Activated naive CD4-positive, alpha-beta T cell treated with anti-CD3 and anti-CD28 coated beads for 36 hours (primary cell): ENCODE measurements at regions of chr7 and their contacts with region 1.

Region 1: DNA sequence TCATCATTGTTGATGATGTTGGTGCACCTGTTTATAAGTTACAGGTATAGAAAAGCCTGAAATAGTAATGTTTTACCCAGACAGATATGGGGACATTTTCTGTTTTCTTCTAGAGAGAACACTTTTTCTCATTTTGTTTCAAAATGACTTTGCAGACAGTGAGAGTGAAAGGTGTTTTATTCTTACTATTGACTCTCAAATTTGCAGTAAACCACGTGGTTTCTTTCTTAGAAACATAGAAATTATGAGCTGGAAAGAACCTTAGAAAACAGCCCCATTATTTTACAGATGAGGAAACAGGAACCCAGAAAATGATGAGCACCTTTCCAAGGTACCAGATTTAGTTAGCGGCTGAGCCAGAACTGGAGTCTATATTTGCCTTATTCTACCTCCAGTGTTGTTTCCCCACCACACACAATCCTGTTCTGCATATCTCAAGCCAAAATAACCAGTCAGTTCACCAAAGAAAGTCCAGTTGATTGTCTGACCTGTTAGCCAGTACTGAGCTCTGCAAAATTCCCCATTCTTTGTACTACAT is 138.9 kb upstream of the AHR start:
- DNase-seq: peak; percentile 45
- H3K4me3 Mint-ChIP-seq: no peak overlapping the region
- H3K27ac Mint-ChIP-seq: peak overlapping the region; percentile 76
- H3K4me1 Mint-ChIP-seq: peaks cover 21% of the 10 kb centered on the region
- H3K27me3 Mint-ChIP-seq: peaks cover 2% of the 10 kb centered on the region

Region 2: DNA sequence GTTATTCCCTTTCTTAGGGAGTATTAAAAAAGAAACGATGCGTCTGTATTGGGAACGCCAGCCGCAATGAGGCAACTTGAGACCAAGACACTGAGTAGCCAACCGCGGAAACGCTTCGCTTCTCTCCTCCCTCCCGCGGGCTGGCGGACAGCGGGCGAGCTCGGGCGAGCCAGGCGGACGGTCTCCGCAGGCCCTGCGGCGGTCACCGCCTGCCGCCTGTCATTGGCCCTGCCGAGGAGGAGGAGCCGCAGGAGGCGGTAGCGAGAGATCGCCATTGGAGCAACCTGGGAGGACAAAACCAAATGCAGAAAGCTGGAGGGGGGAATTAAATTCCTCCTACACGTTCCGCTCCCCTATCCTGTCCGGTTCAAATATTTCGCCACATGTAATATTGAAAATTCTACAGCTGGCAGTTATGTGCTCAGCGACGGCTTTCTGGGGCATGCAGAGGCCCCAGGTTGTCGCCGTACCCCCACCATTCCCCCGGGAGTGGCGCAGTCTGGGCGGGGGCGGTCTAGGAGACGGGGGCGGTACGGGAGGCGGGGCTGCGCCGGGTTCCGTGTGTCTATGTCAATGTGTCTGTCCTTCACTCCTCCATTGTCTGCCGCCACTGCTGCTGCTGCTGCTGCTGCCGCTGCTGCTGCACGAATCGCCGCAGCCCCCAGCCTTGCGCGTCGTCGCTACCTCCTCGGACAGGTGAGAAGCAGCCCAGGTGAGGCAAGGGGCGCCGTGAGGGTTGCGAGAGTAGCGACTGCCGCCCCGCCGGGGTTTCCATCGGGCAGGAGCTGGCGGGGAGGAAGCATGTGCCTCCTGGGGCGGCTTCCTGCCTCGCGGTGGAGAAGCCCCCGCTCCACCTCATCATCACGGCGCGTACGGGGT is 513.7 kb before region 1 on chr7 and contains the starts of genes ANKMY2 and BZW2:
- CTCF ChIA-PET with region 1: no interaction called
- intact Hi-C with region 1: loop called (anchors 5 kb)
- DNase-seq: peak; percentile 94
- H3K4me3 Mint-ChIP-seq: peak within 1 kb of the TSS; percentile 97
- H3K27ac Mint-ChIP-seq: peak within 1 kb of the TSS; percentile 95
- H3K4me1 Mint-ChIP-seq: peaks cover 53% of the 10 kb centered on the region
- H3K27me3 Mint-ChIP-seq: no peaks in the 10 kb centered on the region
- total RNA-seq, gene ANKMY2: 4.6 to 4.7 TPM
- total RNA-seq, gene BZW2: 118 to 122 TPM

Region 3: DNA sequence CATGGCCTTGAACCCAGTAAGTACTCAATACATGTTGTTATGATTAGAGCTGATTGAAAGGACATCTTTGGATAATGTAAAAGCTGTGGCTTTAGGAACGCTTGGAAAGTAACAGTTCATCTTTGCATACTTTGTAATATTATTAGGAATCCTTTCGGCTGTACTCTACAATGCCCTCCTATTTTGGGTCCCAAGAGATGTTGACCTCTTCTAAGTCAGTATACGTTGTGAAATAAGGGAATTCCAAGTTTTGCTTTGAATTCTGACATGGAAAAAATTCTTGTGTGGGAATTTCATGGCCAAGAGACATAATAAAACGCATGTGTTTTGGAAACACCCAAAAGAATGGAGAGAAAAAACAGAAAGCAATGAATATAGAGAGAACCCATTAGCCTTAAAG is 285.5 kb before region 1 on chr7:
- CTCF ChIA-PET with region 1: no interaction called
- intact Hi-C with region 1: no loop called
- DNase-seq: no peak
- H3K4me3 Mint-ChIP-seq: no peak overlapping the region
- H3K27ac Mint-ChIP-seq: no peak overlapping the region
- H3K4me1 Mint-ChIP-seq: no peaks in the 10 kb centered on the region
- H3K27me3 Mint-ChIP-seq: no peaks in the 10 kb centered on the region

Region 4: DNA sequence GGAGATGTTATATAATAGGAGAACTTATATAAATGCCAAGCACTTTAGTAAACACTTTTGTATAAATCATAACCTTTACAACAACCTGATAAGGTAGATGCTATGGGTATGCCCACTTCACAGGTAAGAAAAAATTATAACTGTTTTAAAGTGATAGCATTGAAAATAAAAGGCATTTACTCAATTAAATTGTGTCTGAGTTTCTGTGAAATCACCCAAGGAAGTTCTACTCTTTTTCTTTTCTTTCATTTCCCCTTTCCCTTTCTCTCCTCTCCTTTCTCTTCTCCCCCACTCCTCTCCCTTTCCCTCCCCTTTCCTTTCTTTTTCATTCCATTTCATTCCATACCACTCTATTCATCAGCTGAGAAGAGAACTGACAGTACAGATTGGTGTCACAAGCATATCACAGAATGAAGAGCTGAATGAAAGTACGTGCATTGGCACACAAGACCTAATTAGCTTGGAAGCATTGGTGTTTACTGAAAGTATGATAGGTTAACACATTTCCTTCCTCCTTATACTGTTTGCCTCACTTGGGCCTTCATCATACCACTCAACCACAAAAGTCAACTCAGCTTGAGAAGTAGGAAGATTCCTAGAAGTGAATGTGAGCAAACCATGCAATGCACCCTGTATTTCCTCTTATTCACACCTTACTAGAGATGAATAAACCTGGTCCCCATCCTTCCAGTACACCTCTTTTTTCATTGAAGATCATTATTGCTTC is 159.9 kb before region 1 on chr7:
- CTCF ChIA-PET with region 1: interaction called, 3 read pairs
- intact Hi-C with region 1: loop called (anchors 1 kb)
- DNase-seq: peak; percentile 18
- H3K4me3 Mint-ChIP-seq: no peak overlapping the region
- H3K27ac Mint-ChIP-seq: no peak overlapping the region
- H3K4me1 Mint-ChIP-seq: peaks cover 7% of the 10 kb centered on the region
- H3K27me3 Mint-ChIP-seq: peaks cover 2% of the 10 kb centered on the region

Region 5: GRCh38 chr7:17134786-17135185 is 24.8 kb before region 1 on chr7:
- CTCF ChIA-PET with region 1: interaction called, 5 read pairs
- intact Hi-C with region 1: loop called (anchors 1 kb)
- DNase-seq: peak; percentile 38
- H3K4me3 Mint-ChIP-seq: no peak overlapping the region
- H3K27ac Mint-ChIP-seq: peak overlapping the region; percentile 46
- H3K4me1 Mint-ChIP-seq: peaks cover 54% of the 10 kb centered on the region
- H3K27me3 Mint-ChIP-seq: no peaks in the 10 kb centered on the region

Region 6: DNA sequence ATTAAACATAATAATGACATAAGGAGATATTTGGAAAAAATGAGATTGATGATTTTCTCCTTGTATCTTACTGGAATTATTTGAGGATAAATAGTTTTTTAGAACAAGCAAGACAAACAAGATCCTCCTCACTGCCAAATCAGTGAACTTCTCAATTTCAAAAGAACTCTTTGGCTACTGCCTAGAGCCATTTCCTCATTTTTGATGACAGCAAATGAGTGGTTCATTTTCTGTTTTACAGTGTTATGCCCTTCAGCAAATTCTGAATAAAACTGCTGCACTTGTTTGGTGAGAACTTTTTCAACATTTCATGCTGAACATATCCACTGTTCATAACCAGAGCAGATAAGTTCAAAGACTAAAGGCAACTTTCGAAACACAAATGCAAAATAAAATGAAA is 96.4 kb after region 1 on chr7:
- CTCF ChIA-PET with region 1: no interaction called
- intact Hi-C with region 1: loop called (anchors 1 kb)
- DNase-seq: no peak
- H3K4me3 Mint-ChIP-seq: no peak overlapping the region
- H3K27ac Mint-ChIP-seq: no peak overlapping the region
- H3K4me1 Mint-ChIP-seq: peaks cover 6% of the 10 kb centered on the region
- H3K27me3 Mint-ChIP-seq: no peaks in the 10 kb centered on the region

Region 7: GRCh38 chr7:17339139-17339538 is 179.6 kb after region 1 on chr7:
- CTCF ChIA-PET with region 1: no interaction called
- intact Hi-C with region 1: no loop called
- DNase-seq: no peak
- H3K4me3 Mint-ChIP-seq: no peak overlapping the region
- H3K27ac Mint-ChIP-seq: no peak overlapping the region
- H3K4me1 Mint-ChIP-seq: peaks cover 7% of the 10 kb centered on the region
- H3K27me3 Mint-ChIP-seq: no peaks in the 10 kb centered on the region

Region 8: DNA sequence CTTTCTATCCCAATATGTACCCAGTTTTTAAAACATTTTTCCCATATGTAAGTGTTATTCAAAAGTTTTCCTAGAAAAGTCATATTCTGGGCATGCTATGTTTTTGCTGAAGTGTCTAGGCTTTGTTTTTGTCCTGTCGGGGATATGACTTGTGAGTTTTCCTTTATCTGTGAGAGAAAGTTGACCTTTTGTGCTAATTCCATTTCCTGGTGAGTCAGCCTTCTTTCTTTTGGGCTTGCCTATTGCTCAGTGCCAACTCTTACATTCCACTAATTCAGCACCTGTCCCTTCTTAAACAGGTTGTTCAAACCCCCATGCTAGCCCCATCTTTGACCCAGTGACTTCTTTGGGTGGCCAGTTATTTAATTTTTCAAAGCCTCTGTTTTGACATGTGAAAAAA is 285.1 kb after region 1 on chr7:
- CTCF ChIA-PET with region 1: no interaction called
- intact Hi-C with region 1: loop called (anchors 1 kb)
- DNase-seq: no peak
- H3K4me3 Mint-ChIP-seq: no peak overlapping the region
- H3K27ac Mint-ChIP-seq: no peak overlapping the region
- H3K4me1 Mint-ChIP-seq: peaks cover 11% of the 10 kb centered on the region
- H3K27me3 Mint-ChIP-seq: peaks cover 5% of the 10 kb centered on the region

Region 9: GRCh38 chr7:17706734-17707133 is 547.2 kb after region 1 on chr7:
- CTCF ChIA-PET with region 1: no interaction called
- intact Hi-C with region 1: no loop called
- DNase-seq: peak; percentile 61
- H3K4me3 Mint-ChIP-seq: no peak overlapping the region
- H3K27ac Mint-ChIP-seq: no peak overlapping the region
- H3K4me1 Mint-ChIP-seq: no peaks in the 10 kb centered on the region
- H3K27me3 Mint-ChIP-seq: no peaks in the 10 kb centered on the region